OCI-LY7 (cell line): ENCODE measurements at regions of chr2 and their contacts with region 1.

Region 1: DNA sequence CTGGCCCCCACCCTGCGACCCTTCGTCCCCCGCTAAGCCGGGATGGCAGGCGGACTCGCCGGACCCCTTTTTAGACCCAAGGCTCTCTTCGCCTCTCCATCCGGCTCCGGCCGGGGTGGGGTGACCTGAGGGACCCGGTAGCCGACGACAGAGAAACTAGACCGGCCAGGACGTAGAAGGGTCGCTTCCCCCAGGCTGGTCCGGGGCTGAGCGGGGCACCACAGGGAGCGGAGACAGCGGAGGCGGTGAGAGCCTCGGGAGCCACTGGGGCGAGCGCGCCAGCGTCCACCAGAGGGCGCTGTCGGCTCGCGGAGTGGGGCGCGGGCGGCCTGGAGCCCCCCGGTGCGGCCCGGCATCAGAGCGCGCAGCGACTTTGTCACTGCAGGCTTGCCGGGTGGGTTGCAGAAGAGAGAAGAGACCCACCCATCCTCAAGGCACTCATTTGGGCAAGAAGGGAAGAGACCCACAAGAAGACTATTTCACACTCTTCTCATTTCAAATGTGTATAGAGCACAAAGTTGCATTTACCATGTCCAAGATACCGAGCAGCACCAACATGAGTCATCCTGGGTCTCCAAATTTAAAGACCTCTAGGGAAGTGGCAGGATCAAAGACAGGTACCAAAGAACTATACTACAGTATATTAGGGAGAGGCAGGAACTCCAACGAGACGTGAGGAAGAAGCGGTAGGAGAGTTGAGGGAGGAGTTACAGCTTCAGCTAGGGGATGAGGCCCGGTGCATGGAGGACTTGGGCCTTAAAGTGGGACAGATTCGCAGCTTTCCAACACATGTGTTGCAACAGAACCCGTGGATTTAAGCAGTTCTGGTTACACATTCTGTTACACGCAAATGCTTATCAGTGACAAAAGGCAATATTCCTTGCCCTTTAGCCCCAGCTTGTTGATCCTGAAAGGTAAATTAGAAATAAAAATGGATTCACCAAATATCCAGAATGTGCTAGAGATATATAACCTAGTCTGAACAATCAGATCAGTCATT is 7.6 kb upstream of the PRKCE start:
- DNase-seq: peak; percentile 70
- H3K4me3 ChIP-seq: peak overlapping the region; percentile 62
- H3K27ac ChIP-seq: no peak overlapping the region
- H3K4me1 ChIP-seq: peaks cover 3% of the 10 kb centered on the region
- CTCF ChIP-seq: peak; percentile 92

Region 2: GRCh38 chr2:45778720-45779171 is 134.9 kb after region 1 on chr2:
- CTCF ChIA-PET with region 1: no interaction called
- POLR2A ChIA-PET with region 1: no interaction called
- intact Hi-C with region 1: loop called (anchors 1 kb)
- DNase-seq: peak; percentile 82
- H3K4me3 ChIP-seq: no peak overlapping the region
- H3K27ac ChIP-seq: no peak overlapping the region
- H3K4me1 ChIP-seq: peaks cover 18% of the 10 kb centered on the region
- CTCF ChIP-seq: peak; percentile 93

Region 3: GRCh38 chr2:45935791-45936622 is 292.2 kb after region 1 on chr2:
- CTCF ChIA-PET with region 1: interaction called, 3 read pairs
- POLR2A ChIA-PET with region 1: no interaction called
- intact Hi-C with region 1: loop called (anchors 1 kb)
- DNase-seq: peak; percentile 68
- H3K4me3 ChIP-seq: no peak overlapping the region
- H3K27ac ChIP-seq: no peak overlapping the region
- H3K4me1 ChIP-seq: peaks cover 5% of the 10 kb centered on the region
- CTCF ChIP-seq: peak; percentile 78

Region 4: GRCh38 chr2:45974056-45974455 is 330.2 kb after region 1 on chr2:
- CTCF ChIA-PET with region 1: no interaction called
- POLR2A ChIA-PET with region 1: no interaction called
- intact Hi-C with region 1: no loop called
- DNase-seq: no peak
- H3K4me3 ChIP-seq: no peak overlapping the region
- H3K27ac ChIP-seq: no peak overlapping the region
- H3K4me1 ChIP-seq: no peaks in the 10 kb centered on the region
- CTCF ChIP-seq: no peak

Region 5: DNA sequence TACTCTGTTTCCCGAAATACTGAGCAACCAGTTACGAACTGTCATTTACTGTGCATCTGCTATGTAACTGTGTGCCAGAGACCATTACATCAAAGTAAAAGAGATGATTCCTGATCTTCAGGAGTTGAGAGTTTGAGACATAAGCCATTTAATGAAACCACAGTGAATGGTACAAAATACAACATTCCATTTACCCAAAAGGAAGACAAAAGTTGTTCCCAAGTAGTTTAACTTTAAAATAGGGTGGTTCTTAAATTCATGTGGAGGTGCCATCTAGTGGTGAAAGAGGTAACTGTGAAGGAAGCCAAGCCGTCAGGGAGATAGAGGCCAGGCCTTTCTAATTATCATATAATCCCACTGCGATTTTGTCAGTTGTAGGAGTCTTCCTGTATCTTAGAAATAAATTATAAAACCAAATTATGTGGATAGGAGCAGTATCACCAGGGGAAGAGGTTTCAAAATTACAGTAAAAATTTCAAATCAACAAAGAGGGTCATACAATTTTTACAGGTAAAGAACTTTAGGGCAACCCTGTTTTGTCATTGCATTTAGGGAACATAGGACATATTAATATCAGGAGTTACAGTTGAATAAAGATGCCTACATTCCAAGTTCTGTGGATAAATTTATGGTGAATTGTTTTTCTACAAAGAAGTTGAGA is 721.1 kb after region 1 on chr2:
- CTCF ChIA-PET with region 1: no interaction called
- POLR2A ChIA-PET with region 1: no interaction called
- intact Hi-C with region 1: loop called (anchors 10 kb)
- DNase-seq: peak; percentile 56
- H3K4me3 ChIP-seq: no peak overlapping the region
- H3K27ac ChIP-seq: no peak overlapping the region
- H3K4me1 ChIP-seq: no peaks in the 10 kb centered on the region
- CTCF ChIP-seq: peak; percentile 98